ENCODE measurements at regions of chr19 and their contacts with region 1.

Region 1: DNA sequence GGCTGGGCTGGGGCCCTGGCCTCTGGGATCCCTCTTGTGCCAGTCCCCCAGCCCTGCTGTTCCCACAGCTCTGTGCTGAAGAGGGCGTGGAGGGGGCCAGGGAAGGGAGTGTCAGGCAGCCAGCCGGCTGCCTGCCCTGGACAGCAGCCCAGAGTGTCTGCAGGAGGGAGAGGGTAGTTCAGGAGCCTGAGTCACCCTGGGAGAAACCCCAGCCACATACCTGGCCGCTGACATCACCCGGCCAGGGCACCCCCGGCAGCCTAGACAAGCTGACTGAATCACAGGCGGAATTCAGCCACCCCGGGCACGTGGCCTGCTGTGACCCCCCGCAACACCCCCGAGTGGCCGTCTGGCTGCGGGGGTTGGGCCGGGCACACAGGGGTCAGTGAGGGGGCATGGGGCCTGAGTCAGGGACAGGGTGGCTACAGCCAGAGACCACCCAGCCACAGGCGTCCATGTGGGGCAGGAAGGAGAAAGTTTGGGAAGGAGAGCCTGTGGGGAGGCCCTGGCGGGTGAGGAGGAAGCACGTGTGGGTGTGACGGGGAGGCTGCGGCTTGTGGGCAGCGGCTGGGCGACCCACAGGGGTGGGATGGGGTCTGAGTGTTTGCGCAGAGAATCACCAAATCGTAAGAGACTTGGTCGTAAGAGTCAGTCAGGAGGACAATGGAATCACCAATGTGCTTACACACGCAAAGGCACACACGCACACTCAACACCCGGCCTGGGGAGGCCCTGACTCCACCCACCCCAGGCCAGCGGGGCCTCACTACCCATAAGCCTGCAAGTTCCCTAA is 11.9 kb upstream of the FOSB start:
- DNase-seq: peak; percentile 87 to 97
- ATAC-seq: peak; percentile 93
- H3K4me3 ChIP-seq: peak overlapping the region; percentile 21 to 51 (median 37)
- H3K27ac ChIP-seq: peak overlapping the region; percentile 79 to 89 (median 88)
- H3K4me1 ChIP-seq: peaks cover 22 to 28% of the 10 kb centered on the region in 2 donors
- H3K27me3 ChIP-seq: no peaks in the 10 kb centered on the region
- CTCF ChIP-seq: no peak
- POLR2A ChIP-seq: no peak

Region 2: GRCh38 chr19:45391340-45391739 is 64.6 kb before region 1 on chr19:
- in situ Hi-C with region 1: no loop called
- intact Hi-C with region 1: no loop called
- DNase-seq: no peak
- ATAC-seq: no peak
- H3K4me3 ChIP-seq: no peak overlapping the region
- H3K27ac ChIP-seq: no peak overlapping the region
- H3K4me1 ChIP-seq: no peaks in the 10 kb centered on the region
- H3K27me3 ChIP-seq: peaks cover 10 to 15% (median 11%) of the 10 kb centered on the region in 3 donors
- CTCF ChIP-seq: no peak
- POLR2A ChIP-seq: no peak

Region 3: GRCh38 chr19:45469132-45469944 is 13.4 kb after region 1 on chr19:
- in situ Hi-C with region 1: no loop called
- intact Hi-C with region 1: loop called (anchors 1 kb)
- DNase-seq: peak; percentile 87 to 95
- ATAC-seq: peak; percentile 85 to 88
- H3K4me3 ChIP-seq: peak overlapping the region; percentile 64 to 84 (median 79)
- H3K27ac ChIP-seq: peak overlapping the region; percentile 90 to 98 (median 94)
- H3K4me1 ChIP-seq: peaks cover 20 to 22% of the 10 kb centered on the region in 2 donors
- H3K27me3 ChIP-seq: no peaks in the 10 kb centered on the region
- CTCF ChIP-seq: no peak
- POLR2A ChIP-seq: peak; percentile 79 to 93

Region 4: GRCh38 chr19:45753546-45753945 is 297.6 kb after region 1 on chr19:
- in situ Hi-C with region 1: no loop called
- intact Hi-C with region 1: no loop called
- DNase-seq: no peak
- ATAC-seq: no peak
- H3K4me3 ChIP-seq: no peak overlapping the region
- H3K27ac ChIP-seq: no peak overlapping the region
- H3K4me1 ChIP-seq: no peaks in the 10 kb centered on the region
- H3K27me3 ChIP-seq: no peaks in the 10 kb centered on the region
- CTCF ChIP-seq: no peak
- POLR2A ChIP-seq: no peak

Region 5: DNA sequence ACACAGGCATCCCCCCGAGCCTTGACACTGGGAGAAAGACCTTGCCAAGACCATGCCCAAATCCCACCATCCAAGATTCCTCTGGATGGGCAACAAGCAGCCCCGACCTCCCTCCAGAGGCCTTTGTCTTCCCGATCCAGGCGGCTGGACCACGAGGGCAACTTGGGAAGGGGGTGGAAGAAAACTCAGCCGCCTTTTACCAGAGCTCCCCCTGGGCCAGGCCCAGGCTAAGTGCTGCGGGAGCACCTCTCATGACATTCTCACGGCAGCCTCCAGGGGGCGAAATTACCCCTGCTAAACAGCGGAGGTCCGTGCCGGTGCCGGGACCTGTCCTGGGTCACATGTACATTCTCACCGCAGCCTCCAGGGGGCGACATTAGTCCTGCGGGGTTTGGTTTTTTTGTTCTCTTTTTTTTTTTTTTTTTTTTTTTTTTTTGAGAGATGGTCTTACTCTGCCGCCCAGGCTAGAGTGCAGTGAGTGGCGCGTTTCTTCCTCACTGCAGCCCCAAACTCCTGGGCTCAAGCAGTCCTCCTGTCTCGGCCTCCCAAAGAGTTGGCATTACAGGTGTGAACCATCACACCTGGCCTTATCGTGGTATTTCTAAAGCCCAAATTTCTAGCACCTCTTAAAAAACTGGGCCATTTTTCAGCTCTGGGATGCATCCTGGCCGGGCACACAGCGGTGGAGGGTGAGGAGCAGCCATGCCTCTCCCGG is 361.3 kb after region 1 on chr19:
- in situ Hi-C with region 1: no loop called
- intact Hi-C with region 1: no loop called
- DNase-seq: peak; percentile 78 to 88
- ATAC-seq: peak; percentile 85 to 95
- H3K4me3 ChIP-seq: no peak overlapping the region
- H3K27ac ChIP-seq: no peak overlapping the region
- H3K4me1 ChIP-seq: peaks cover 0 to 3% of the 10 kb centered on the region in 2 donors
- H3K27me3 ChIP-seq: peaks cover 0 to 11% (median 5%) of the 10 kb centered on the region in 3 donors
- CTCF ChIP-seq: peak; percentile 87 to 96 (median 92)
- POLR2A ChIP-seq: no peak